ENCODE measurements at regions of chr2 and their contacts with region 1.

Region 1: DNA sequence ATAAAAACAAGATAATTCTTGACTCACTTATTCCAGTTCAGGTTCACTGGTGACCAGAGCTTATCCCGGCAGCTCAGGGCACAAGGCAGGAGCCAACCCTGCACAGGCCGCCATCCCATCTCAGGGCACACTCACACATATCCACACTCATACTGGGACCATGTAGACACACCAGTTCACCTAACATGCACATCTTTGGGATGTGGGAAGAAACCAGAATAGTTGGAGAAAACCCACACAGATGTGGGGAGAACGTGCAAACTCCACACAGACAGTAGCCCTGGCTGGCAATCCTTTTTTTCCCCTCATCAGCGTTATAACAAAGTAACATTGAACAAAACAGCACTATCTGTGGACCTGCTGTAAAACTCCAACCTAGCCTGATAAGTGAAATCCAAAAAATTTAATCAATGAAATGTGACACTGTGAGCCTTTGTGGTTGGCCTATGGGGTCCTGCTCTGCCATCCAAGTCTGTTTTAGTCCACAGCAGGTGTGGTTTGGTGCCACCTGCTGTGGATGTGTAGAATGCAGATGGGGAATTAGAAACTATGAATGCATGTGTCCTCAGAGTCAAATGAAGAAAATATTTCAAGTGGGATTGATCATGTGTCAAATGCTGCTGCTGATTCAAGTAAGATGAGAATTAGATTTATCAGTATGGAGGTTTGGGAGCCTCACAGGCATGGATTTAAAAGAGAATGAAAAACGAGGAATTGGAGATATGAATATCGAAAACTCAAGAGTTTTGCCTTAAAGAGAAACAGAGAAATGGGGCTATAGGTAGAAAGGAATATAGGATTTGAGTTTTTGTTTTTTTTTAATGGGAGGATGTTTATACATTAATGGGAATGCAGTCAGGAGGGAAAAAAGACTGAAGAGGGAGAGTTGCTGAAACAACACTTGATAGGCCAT is 47.0 kb downstream of the UGP2 start:
- DNase-seq: no peak
- H3K4me3 ChIP-seq: no peak overlapping the region
- H3K27ac ChIP-seq: peak overlapping the region in 2 of 4 donors; percentile 5 to 16
- H3K4me1 ChIP-seq: peaks cover 0 to 37% (median 26%) of the 10 kb centered on the region in 4 donors
- H3K27me3 ChIP-seq: no peaks in the 10 kb centered on the region
- CTCF ChIP-seq: peak; percentile 70 to 81 (median 74)
- EP300 ChIP-seq: no peak
- POLR2A ChIP-seq: no peak

Region 2: GRCh38 chr2:63692002-63692606 is 196.6 kb before region 1 on chr2:
- intact Hi-C with region 1: loop called (anchors 5 kb)
- DNase-seq: no peak
- H3K4me3 ChIP-seq: no peak overlapping the region
- H3K27ac ChIP-seq: no peak overlapping the region
- H3K4me1 ChIP-seq: no peaks in the 10 kb centered on the region
- H3K27me3 ChIP-seq: no peaks in the 10 kb centered on the region
- CTCF ChIP-seq: peak; percentile 60 to 68 (median 63)
- EP300 ChIP-seq: no peak
- POLR2A ChIP-seq: no peak

Region 3: GRCh38 chr2:63841254-63842022 is 47.3 kb before region 1 on chr2 and contains the start of gene UGP2:
- intact Hi-C with region 1: loop called (anchors 5 kb)
- DNase-seq: peak; percentile 97
- H3K4me3 ChIP-seq: peak within 1 kb of the TSS; percentile 74 to 99 (median 90)
- H3K27ac ChIP-seq: peak within 1 kb of the TSS; percentile 92 to 98 (median 98)
- H3K4me1 ChIP-seq: peaks cover 34 to 46% (median 44%) of the 10 kb centered on the region in 4 donors
- H3K27me3 ChIP-seq: no peaks in the 10 kb centered on the region
- CTCF ChIP-seq: peak in 1 of 3 experiments; percentile 30
- EP300 ChIP-seq: no peak
- POLR2A ChIP-seq: peak; percentile 65
- total RNA-seq, gene UGP2: 163 to 247 (median 198) TPM

Region 4: DNA sequence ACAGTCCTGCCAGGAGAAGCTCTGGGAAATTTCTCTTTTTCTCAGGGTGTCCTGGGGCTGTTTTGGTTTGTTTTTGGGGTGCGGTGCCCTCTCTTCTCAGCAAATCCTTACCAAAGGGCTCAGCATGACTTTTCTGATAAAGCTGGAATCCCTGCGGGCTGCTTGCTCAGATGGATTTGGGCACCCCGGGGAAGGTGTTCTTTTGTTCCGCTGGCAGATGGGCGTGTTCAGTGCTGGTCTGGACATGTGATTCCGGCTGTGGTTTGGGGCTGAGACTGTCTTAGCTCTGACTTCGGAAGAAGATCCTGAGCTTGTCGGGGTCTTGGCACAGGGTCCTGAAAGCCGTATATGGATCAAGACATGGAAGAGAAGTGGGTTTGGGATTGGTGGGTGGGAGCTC is 1677.9 kb after region 1 on chr2:
- intact Hi-C with region 1: no loop called
- DNase-seq: no peak
- H3K4me3 ChIP-seq: no peak overlapping the region
- H3K27ac ChIP-seq: no peak overlapping the region
- H3K4me1 ChIP-seq: no peaks in the 10 kb centered on the region
- H3K27me3 ChIP-seq: no peaks in the 10 kb centered on the region
- CTCF ChIP-seq: no peak
- EP300 ChIP-seq: no peak
- POLR2A ChIP-seq: no peak